CD14-positive monocyte (primary cell): ENCODE measurements at regions of chr3 and their contacts with region 1.

Region 1: GRCh38 chr3:25648107-25648535 is 16.6 kb downstream of the TOP2B start:
- DNase-seq: peak; percentile 72 to 81 (median 73)
- H3K4me3 ChIP-seq: no peak overlapping the region
- H3K4me3 Mint-ChIP-seq: no peak overlapping the region
- H3K27ac ChIP-seq: peak overlapping the region in 1 of 2 donors; percentile 62
- H3K27ac Mint-ChIP-seq: peak overlapping the region in 3 of 7 donors; percentile 12 to 77 (median 50)
- H3K4me1 ChIP-seq: no peaks in the 10 kb centered on the region
- H3K4me1 Mint-ChIP-seq: peaks cover 18% of the 10 kb centered on the region
- H3K27me3 ChIP-seq: no peaks in the 10 kb centered on the region
- H3K27me3 Mint-ChIP-seq: no peaks in the 10 kb centered on the region
- CTCF ChIP-seq: peak; percentile 93

Region 2: GRCh38 chr3:25582242-25582641 is 65.9 kb before region 1 on chr3:
- intact Hi-C with region 1: no loop called
- DNase-seq: peak in 2 of 3 donors; percentile 20 to 72
- H3K4me3 ChIP-seq: no peak overlapping the region
- H3K4me3 Mint-ChIP-seq: no peak overlapping the region
- H3K27ac ChIP-seq: no peak overlapping the region
- H3K27ac Mint-ChIP-seq: peak overlapping the region in 3 of 7 donors; percentile 18 to 67 (median 45)
- H3K4me1 ChIP-seq: no peaks in the 10 kb centered on the region
- H3K4me1 Mint-ChIP-seq: peaks cover 8% of the 10 kb centered on the region
- H3K27me3 ChIP-seq: no peaks in the 10 kb centered on the region
- H3K27me3 Mint-ChIP-seq: peaks cover 5 to 8% (median 6%) of the 10 kb centered on the region in 3 donors
- CTCF ChIP-seq: no peak

Region 3: GRCh38 chr3:25856902-25857518 is 208.9 kb after region 1 on chr3:
- intact Hi-C with region 1: loop called (anchors 2 to 5 kb)
- DNase-seq: peak; percentile 21 to 54 (median 43)
- H3K4me3 ChIP-seq: no peak overlapping the region
- H3K4me3 Mint-ChIP-seq: no peak overlapping the region
- H3K27ac ChIP-seq: no peak overlapping the region
- H3K27ac Mint-ChIP-seq: no peak overlapping the region
- H3K4me1 ChIP-seq: no peaks in the 10 kb centered on the region
- H3K4me1 Mint-ChIP-seq: no peaks in the 10 kb centered on the region
- H3K27me3 ChIP-seq: no peaks in the 10 kb centered on the region
- H3K27me3 Mint-ChIP-seq: peaks cover 0 to 3% (median 2%) of the 10 kb centered on the region in 3 donors
- CTCF ChIP-seq: peak; percentile 79